ENCODE measurements at regions of chr4 and their contacts with region 1.

Region 1: DNA sequence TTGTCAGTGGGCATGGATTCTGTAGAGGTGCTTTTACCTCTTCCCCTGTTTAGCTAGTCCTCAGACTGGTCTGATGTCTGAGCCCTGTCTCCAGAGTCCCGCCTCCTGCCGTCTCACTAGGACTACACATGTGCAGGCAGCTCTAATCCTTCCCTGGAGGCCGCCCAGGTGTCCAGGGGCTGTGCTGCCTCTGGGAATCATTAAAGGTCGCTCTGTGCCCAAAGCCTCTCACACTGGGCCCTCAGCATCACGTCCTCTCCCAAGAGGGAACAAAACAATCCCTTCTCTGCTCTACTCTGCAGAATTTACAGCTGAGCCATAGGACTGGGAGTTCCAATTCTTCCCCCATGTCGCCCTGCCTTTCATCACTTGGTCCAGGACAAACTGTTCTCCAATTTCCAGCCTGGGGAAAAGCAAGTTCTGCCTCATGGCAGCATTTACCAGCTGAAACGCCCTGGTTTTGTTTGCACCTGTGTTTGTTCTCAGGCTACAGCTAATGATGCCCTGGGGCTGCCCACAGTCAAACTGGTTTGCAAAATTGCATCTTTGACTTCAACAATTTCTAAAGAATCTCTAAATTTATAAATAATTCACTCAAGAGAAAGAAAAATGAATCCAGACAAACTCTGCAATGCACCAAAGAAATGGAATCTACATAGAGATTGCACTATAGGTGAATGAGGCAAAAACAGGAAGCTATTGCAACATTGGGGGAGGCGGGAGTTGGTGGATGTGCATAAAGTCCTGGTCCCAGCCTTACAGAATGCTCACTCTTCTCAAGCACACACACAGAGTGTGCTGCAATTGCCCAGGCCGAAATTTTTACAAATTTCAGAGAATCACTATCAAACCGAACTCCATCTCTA is 7.2 kb upstream of the MRFAP1 start:
- DNase-seq: peak; percentile 84
- H3K4me3 Mint-ChIP-seq: peak overlapping the region; percentile 46
- H3K27ac Mint-ChIP-seq: peak overlapping the region; percentile 85
- H3K4me1 Mint-ChIP-seq: peaks cover 18% of the 10 kb centered on the region
- H3K27me3 Mint-ChIP-seq: no peaks in the 10 kb centered on the region
- CTCF ChIP-seq: no peak

Region 2: GRCh38 chr4:6574747-6575502 is 58.3 kb before region 1 on chr4 and contains the start of gene MAN2B2:
- CTCF ChIA-PET with region 1: no interaction called
- POLR2A ChIA-PET with region 1: interaction called, 6 read pairs
- intact Hi-C with region 1: loop called (anchors 5 kb)
- DNase-seq: peak; percentile 79
- H3K4me3 Mint-ChIP-seq: peak within 1 kb of the TSS; percentile 76
- H3K27ac Mint-ChIP-seq: peak within 1 kb of the TSS; percentile 73
- H3K4me1 Mint-ChIP-seq: no peaks in the 10 kb centered on the region
- H3K27me3 Mint-ChIP-seq: no peaks in the 10 kb centered on the region
- CTCF ChIP-seq: no peak
- total RNA-seq, gene MAN2B2: 12.5 and 13.9 TPM in 2 replicates

Region 3: GRCh38 chr4:6709230-6710114 is 76.2 kb after region 1 on chr4 and contains the start of gene MRFAP1L1:
- CTCF ChIA-PET with region 1: interaction called, 3 read pairs
- POLR2A ChIA-PET with region 1: interaction called, 18 read pairs
- intact Hi-C with region 1: no loop called
- DNase-seq: peak; percentile 96
- H3K4me3 Mint-ChIP-seq: peak within 1 kb of the TSS; percentile 98
- H3K27ac Mint-ChIP-seq: peak within 1 kb of the TSS; percentile 98
- H3K4me1 Mint-ChIP-seq: peaks cover 46% of the 10 kb centered on the region
- H3K27me3 Mint-ChIP-seq: no peaks in the 10 kb centered on the region
- CTCF ChIP-seq: peak; percentile 6
- total RNA-seq, gene MRFAP1L1: 42.5 and 63.2 TPM in 2 replicates